Tibial artery (tissue), 4 donors: ENCODE measurements at regions of chr5 and their contacts with region 1.

Region 1: GRCh38 chr5:38780950-38781349 is 64.9 kb upstream of the OSMR start:
- DNase-seq: peak; percentile 70 to 73
- H3K4me3 ChIP-seq: no peak overlapping the region
- H3K27ac ChIP-seq: no peak overlapping the region
- H3K4me1 ChIP-seq: peaks cover 0 to 34% (median 24%) of the 10 kb centered on the region in 4 donors
- H3K27me3 ChIP-seq: no peaks in the 10 kb centered on the region
- CTCF ChIP-seq: no peak

Region 2: GRCh38 chr5:38396766-38397165 is 384.2 kb before region 1 on chr5:
- intact Hi-C with region 1: no loop called
- DNase-seq: no peak
- H3K4me3 ChIP-seq: no peak overlapping the region
- H3K27ac ChIP-seq: no peak overlapping the region
- H3K4me1 ChIP-seq: no peaks in the 10 kb centered on the region
- H3K27me3 ChIP-seq: no peaks in the 10 kb centered on the region
- CTCF ChIP-seq: no peak

Region 3: DNA sequence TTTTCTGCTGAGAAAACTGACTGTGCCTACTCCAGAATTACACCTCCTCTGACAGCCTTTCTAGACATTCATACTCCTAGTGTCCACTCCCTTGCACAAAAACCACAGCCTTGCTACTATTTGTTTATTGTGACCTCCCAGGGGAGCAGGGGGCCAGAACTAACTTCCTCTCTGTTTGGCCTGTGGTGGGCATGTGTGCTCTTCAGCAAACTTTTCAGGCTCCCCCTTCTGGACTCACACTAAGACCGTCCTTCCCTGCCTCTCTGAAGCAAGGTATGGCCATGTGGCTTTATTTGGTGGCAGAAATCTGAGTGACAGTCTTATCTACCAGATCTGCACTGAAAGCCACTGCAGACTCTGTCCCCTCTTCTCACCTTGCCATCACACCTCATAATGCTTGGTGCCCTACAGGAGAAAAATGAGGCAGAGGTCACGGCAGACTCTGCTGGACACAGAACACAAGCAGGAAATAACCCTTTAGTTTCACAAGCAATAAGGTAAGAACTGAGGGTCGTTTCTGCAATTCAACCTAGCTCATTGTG is 252.7 kb before region 1 on chr5:
- intact Hi-C with region 1: no loop called
- DNase-seq: no peak
- H3K4me3 ChIP-seq: no peak overlapping the region
- H3K27ac ChIP-seq: no peak overlapping the region
- H3K4me1 ChIP-seq: peaks cover 0 to 38% (median 5%) of the 10 kb centered on the region in 4 donors
- H3K27me3 ChIP-seq: no peaks in the 10 kb centered on the region
- CTCF ChIP-seq: no peak

Region 4: GRCh38 chr5:38556599-38557305 is 224.2 kb before region 1 on chr5 and contains the start of gene LIFR:
- intact Hi-C with region 1: loop called (anchors 10 kb)
- DNase-seq: peak; percentile 78 to 91
- H3K4me3 ChIP-seq: peak within 1 kb of the TSS; percentile 72 to 90
- H3K27ac ChIP-seq: peak within 1 kb of the TSS; percentile 99
- H3K4me1 ChIP-seq: peaks cover 0 to 41% (median 6%) of the 10 kb centered on the region in 4 donors
- H3K27me3 ChIP-seq: no peaks in the 10 kb centered on the region
- CTCF ChIP-seq: peak in 1 of 2 experiments; percentile 6

Region 5: GRCh38 chr5:40514976-40515375 is 1734.0 kb after region 1 on chr5:
- intact Hi-C with region 1: loop called (anchors 5 kb)
- DNase-seq: no peak
- H3K4me3 ChIP-seq: no peak overlapping the region
- H3K27ac ChIP-seq: no peak overlapping the region
- H3K4me1 ChIP-seq: no peaks in the 10 kb centered on the region
- H3K27me3 ChIP-seq: no peaks in the 10 kb centered on the region
- CTCF ChIP-seq: no peak